Activated CD4-positive, alpha-beta T cell treated with anti-CD3 and anti-CD28 coated beads for 36 hours (primary cell): ENCODE measurements at regions of chr1 and their contacts with region 1.

Region 1: DNA sequence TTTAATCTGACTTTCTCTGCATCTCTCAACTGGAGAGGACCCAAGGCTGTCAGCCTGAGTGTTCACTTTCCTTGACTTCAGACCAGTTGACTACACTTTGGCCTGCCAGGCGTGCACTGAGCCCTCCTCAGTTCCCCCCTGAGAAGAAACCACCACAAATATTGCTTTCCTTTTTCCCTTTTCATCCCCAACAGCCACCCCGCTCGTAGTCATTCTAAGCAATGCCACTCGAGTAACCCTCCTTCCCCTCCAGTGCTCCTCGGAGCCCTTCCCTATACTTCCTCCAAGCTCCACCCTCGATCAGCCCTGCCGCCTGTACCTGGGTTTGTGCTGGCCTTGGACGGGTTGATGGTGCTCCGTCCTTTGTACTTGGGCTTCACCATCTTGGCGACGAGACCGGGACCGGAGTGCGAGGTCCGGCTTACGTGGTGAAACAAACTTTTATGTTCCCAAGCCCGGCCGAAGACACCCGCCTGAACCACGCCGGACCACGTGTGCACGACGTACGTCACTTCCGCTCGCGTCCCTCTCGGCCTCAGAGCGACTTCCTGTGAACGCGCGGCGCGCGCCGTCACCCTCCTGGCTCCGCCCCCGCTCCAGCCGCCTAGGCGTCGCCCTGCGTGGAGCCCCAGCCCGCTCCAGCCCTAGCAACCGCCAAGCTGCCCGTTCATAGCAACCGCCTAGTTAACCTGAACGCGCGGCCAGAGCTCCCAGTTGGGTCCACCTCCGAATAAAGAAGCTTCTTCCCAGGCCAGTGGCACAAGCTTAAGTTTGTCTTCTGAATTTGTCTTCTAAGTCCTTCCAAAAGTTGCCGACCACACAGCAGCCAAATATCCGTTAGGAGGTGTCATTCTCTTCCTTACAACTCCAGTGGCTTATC is at the start of gene GNL2:
- DNase-seq: peak; percentile 99
- ATAC-seq: peak; percentile 98
- H3K4me3 Mint-ChIP-seq: peak within 1 kb of the TSS; percentile 98
- H3K27ac Mint-ChIP-seq: peak within 1 kb of the TSS; percentile 92
- H3K4me1 Mint-ChIP-seq: peaks cover 37% of the 10 kb centered on the region
- H3K27me3 Mint-ChIP-seq: no peaks in the 10 kb centered on the region
- total RNA-seq, gene GNL2: 82.3 to 98.8 TPM

Region 2: DNA sequence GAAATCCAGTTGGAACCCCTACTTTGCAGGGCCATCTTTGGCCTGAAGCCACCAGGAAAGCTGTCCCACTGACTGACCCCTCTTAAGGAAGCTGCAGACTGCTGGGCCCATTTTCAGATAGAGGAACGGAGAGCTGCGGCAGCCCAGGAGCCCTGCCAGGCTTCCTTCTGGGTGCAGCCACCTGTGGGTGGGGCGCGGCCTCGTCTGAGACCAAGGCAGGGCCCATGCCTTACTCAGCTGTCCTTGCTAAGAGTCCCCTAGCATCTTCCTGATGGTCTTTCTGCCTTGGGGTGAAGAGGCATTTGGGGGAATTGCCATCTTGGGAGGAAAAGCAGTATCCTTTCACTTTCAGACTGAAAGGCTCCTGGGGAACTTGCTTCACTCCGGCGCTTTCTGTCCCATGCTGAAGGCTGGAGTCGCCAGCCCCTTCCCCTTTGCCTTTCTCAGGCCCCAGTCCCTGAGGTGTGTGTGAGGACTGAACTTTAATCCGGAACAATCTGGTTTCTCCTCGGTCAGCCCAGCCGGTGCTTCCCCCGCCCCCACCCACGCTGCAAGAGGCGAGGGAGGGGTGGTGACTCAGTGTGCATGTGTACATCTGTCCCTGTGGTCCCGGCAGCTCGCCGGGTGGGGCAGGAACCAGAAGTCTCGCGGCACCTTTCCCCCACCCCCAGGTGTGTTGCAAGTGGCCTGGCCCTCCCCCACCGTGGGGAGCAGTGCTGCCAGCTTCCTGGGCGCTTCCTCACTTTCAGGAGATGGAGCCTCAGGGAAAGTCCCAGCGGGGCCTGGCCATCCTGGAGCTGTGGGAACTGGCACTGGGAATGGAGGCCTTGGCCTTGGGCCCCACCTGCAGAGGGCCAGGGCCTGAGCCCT is 116.2 kb before region 1 on chr1:
- CTCF ChIA-PET with region 1: no interaction called
- POLR2A ChIA-PET with region 1: no interaction called
- intact Hi-C with region 1: loop called (anchors 1 to 5 kb)
- DNase-seq: peak; percentile 96
- ATAC-seq: peak; percentile 52
- H3K4me3 Mint-ChIP-seq: peak overlapping the region; percentile 95
- H3K27ac Mint-ChIP-seq: peak overlapping the region; percentile 98
- H3K4me1 Mint-ChIP-seq: peaks cover 32% of the 10 kb centered on the region
- H3K27me3 Mint-ChIP-seq: no peaks in the 10 kb centered on the region

Region 3: DNA sequence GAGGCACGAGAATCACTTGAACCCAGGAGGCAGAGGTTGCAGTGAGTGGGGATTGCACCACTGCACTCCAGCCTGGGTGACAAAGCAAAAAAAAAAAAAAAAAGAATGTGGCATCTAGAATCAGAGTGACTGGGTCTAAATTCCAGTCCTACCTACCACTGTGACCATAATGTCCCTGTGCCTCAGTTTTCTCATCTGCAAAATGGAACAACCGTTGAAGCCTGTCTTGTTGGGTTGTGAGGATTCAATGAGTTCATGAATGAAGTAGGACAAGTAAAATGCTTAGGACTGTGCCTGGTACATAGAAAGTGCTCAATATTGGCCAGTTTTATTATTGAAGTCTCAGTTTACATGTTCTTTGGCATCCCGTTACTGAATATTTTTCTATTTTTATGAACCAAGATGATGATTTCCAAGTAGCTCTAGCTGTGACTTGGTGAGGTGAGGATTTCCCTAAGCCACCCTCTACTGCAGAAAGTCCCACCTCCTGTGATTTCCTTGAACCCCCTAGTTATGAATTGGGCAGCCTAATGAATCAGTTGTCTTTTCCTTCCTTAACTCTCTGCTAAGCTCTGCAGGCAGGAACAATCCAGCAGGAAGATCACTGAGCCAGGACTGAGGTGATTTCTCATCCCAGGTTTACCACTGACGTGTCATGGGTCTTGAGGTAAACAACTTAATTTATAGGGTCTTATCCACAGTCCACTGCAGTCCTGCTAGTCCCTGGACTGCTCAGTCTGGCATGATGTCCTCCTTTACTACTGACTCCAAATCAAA is 62.2 kb before region 1 on chr1:
- CTCF ChIA-PET with region 1: no interaction called
- POLR2A ChIA-PET with region 1: no interaction called
- intact Hi-C with region 1: no loop called
- DNase-seq: no peak
- ATAC-seq: no peak
- H3K4me3 Mint-ChIP-seq: no peak overlapping the region
- H3K27ac Mint-ChIP-seq: no peak overlapping the region
- H3K4me1 Mint-ChIP-seq: peaks cover 23% of the 10 kb centered on the region
- H3K27me3 Mint-ChIP-seq: no peaks in the 10 kb centered on the region

Region 4: GRCh38 chr1:37553927-37554808 is 41.5 kb before region 1 on chr1 and contains the start of gene SNIP1:
- CTCF ChIA-PET with region 1: interaction called, 3 read pairs
- POLR2A ChIA-PET with region 1: no interaction called
- intact Hi-C with region 1: loop called in 1 of 2 experiments (anchors 1 kb)
- DNase-seq: peak; percentile 95
- ATAC-seq: peak; percentile 93
- H3K4me3 Mint-ChIP-seq: peak within 1 kb of the TSS; percentile 92
- H3K27ac Mint-ChIP-seq: peak within 1 kb of the TSS; percentile 95
- H3K4me1 Mint-ChIP-seq: peaks cover 36% of the 10 kb centered on the region
- H3K27me3 Mint-ChIP-seq: no peaks in the 10 kb centered on the region
- total RNA-seq, gene SNIP1: 18.7 to 21.3 TPM

Region 5: DNA sequence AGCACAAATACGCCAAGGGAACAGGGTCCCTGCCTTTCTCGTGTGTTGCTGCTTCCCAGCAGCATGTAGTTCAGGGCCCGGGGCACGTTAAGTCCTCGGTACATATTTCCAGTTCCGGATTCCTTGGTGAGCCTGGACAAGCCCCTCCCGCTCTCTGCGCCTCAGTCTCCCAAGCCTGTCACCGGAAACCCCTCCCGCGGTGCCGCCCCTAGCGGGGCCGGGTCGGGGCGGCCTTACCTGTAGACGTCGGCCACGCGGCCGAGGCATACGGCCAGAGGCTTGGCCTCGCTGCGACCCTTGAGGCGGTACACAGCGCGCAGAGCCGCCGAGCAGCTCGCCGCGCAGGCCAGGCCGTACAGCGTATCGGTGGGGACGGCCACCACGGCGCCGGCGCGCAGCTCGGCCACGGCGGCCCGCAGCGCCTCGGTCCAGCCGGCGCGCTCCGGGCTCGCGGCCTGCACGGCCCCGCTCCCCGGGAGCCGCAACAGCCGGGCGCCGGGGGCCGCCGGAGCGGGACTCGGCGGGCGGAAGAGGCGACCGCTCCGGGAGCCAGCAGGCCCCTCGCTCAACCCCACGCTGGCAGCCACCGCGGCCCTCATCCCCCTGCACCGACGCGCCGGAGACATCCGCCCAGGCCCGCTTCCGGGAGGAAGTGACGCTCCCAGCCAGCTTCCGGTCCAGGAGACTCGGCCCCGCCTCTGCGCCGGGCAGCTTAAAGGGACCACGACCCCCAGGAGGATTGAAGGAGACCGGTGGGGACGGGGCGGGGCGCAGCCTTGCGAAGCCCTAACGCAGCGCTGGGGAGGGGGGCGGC is 212.1 kb after region 1 on chr1 and contains the starts of genes C1orf122 and YRDC:
- CTCF ChIA-PET with region 1: interaction called, 4 read pairs
- POLR2A ChIA-PET with region 1: no interaction called
- intact Hi-C with region 1: loop called in 1 of 2 experiments (anchors 1 kb)
- DNase-seq: peak; percentile 95
- ATAC-seq: peak; percentile 92
- H3K4me3 Mint-ChIP-seq: peak within 1 kb of the TSS; percentile 90
- H3K27ac Mint-ChIP-seq: peak within 1 kb of the TSS; percentile 93
- H3K4me1 Mint-ChIP-seq: peaks cover 34% of the 10 kb centered on the region
- H3K27me3 Mint-ChIP-seq: no peaks in the 10 kb centered on the region
- total RNA-seq, gene C1orf122: 10.8 to 17.9 TPM
- total RNA-seq, gene YRDC: 22.9 to 36.3 TPM

Region 6: DNA sequence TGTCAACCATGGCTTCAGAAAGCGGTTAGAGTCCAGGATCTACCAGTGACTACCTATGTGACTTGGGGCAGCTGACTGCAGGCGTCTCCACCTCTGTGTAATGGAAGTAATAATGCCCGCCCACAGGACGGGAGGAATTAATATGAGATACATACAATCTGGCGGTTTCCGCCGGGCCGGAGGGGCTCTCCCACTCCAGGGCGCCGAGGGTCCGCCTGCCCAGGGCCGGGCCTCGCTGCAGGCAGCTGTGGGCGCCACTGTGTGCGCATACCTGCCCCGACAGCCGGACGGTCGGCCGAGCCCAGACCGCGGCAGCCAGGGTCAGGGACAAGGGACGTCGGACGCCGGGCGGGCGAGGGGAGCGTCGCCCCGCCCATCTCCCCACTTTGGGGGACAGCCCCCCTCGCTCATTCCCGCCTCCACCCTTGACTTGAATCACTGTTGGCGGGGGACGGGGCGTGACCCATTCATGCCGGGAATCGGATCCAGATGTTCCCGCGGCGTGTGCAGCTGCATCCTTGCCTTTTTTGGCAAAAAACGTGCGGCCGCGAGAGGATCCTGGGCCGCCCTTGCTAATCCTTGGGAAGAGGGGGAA is 400.2 kb after region 1 on chr1:
- CTCF ChIA-PET with region 1: no interaction called
- POLR2A ChIA-PET with region 1: no interaction called
- intact Hi-C with region 1: loop called in 1 of 2 experiments (anchors 10 kb)
- DNase-seq: peak; percentile 65
- ATAC-seq: peak; percentile 73
- H3K4me3 Mint-ChIP-seq: peak overlapping the region; percentile 69
- H3K27ac Mint-ChIP-seq: peak overlapping the region; percentile 72
- H3K4me1 Mint-ChIP-seq: peaks cover 37% of the 10 kb centered on the region
- H3K27me3 Mint-ChIP-seq: no peaks in the 10 kb centered on the region